Activated B cell treated with CpG ODN at 0.5 μM for 24 hours (primary cell): ENCODE measurements at regions of chr10 and their contacts with region 1.

Region 1: GRCh38 chr10:102641880-102642735 is 2.2 kb upstream of the TRIM8 start:
- DNase-seq: peak; percentile 88
- ATAC-seq: peak; percentile 65
- H3K4me3 Mint-ChIP-seq: peak overlapping the region; percentile 88
- H3K27ac Mint-ChIP-seq: peak overlapping the region; percentile 96
- H3K4me1 Mint-ChIP-seq: peaks cover 27% of the 10 kb centered on the region
- H3K27me3 Mint-ChIP-seq: no peaks in the 10 kb centered on the region
- CTCF ChIP-seq: no peak

Region 2: GRCh38 chr10:100998991-100999741 is 1642.9 kb before region 1 on chr10:
- CTCF ChIA-PET with region 1: no interaction called
- POLR2A ChIA-PET with region 1: no interaction called
- intact Hi-C with region 1: loop called (anchors 5 kb)
- DNase-seq: peak; percentile 85
- ATAC-seq: peak; percentile 63
- H3K4me3 Mint-ChIP-seq: peak overlapping the region; percentile 87
- H3K27ac Mint-ChIP-seq: peak overlapping the region; percentile 88
- H3K4me1 Mint-ChIP-seq: peaks cover 30% of the 10 kb centered on the region
- H3K27me3 Mint-ChIP-seq: no peaks in the 10 kb centered on the region
- CTCF ChIP-seq: peak; percentile 80

Region 3: DNA sequence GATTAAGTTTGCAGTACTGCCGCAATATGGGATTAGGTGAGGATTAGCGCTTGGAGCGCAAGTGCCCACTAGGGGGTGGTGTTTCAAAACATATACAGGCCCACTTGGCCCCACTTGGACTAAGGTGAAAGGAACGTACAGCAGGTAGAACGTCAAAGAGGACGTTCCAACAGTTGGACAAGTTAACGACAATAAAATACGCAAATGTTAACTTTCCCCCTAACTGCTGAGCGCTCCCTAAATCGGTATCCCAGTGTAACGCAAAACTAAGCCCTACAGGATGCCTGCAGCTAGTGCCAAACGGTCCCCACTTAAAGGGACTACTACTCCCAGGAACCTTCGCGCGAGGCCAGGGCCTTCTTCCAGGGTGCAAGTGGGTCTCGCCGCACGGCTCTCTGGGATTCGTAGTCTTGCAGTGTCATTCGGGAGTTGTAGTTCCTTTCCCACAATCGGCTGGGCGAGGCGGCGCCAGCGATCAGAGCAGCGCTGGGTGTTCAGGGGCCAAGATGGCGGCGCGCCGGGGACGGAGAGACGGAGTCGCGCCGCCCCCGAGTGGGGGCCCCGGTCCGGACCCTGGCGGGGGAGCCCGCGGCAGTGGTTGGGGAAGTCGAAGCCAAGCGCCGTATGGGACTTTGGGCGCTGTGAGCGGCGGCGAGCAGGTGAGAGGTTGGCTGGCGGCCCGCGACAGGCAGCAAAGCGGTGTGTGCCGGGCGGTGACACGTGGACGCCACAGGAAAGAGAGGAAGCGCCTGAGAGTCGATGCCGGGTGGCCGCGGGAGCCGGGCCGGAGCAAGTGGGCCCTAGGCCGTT is 509.3 kb before region 1 on chr10 and contains the start of gene PPRC1:
- CTCF ChIA-PET with region 1: no interaction called
- POLR2A ChIA-PET with region 1: no interaction called
- intact Hi-C with region 1: loop called (anchors 2 kb)
- DNase-seq: peak; percentile 89
- ATAC-seq: peak; percentile 93
- H3K4me3 Mint-ChIP-seq: peak within 1 kb of the TSS; percentile 99
- H3K27ac Mint-ChIP-seq: peak within 1 kb of the TSS; percentile 98
- H3K4me1 Mint-ChIP-seq: peaks cover 41% of the 10 kb centered on the region
- H3K27me3 Mint-ChIP-seq: no peaks in the 10 kb centered on the region
- CTCF ChIP-seq: peak; percentile 81
- total RNA-seq, gene PPRC1: 65.1 and 77.2 TPM in 2 replicates

Region 4: DNA sequence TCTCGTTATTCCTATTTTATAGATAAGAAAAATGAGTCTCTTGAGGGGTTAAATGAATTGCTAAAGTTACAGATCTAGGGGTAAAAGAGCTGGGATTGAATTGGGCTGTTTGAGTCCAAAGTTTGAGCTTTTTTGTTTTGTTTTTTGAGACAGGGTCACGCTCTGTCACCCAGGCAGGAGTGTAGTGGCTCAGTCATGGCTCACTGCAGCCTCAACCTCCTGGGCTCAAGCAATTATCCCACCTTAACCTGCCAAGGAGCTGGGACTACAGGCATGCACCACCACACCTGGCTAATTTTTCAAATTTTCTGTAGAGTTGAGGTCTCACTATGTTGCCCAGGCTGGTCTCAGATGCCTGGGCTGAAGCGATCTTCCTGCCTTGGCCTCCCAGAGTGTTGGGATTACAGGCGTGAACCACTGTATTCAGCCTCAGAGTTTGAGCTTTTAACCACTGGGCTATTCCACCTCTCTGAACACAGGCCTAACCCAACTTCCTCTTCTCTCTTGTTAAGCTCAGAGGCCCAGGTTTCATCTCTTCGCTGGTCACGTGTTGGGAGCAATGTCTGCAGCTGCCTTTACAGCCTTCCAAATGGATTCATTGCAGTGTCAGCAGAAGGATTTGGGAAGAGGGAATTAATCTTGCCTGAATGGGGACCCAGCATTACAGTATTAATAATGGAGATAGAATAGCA is 130.4 kb before region 1 on chr10:
- CTCF ChIA-PET with region 1: no interaction called
- POLR2A ChIA-PET with region 1: interaction called, 13 read pairs
- intact Hi-C with region 1: no loop called
- DNase-seq: no peak
- ATAC-seq: peak; percentile 99
- H3K4me3 Mint-ChIP-seq: peak overlapping the region; percentile 42
- H3K27ac Mint-ChIP-seq: peak overlapping the region; percentile 86
- H3K4me1 Mint-ChIP-seq: peaks cover 16% of the 10 kb centered on the region
- H3K27me3 Mint-ChIP-seq: no peaks in the 10 kb centered on the region
- CTCF ChIP-seq: no peak

Region 5: GRCh38 chr10:102652170-102652916 is 10.2 kb after region 1 on chr10:
- CTCF ChIA-PET with region 1: no interaction called
- POLR2A ChIA-PET with region 1: interaction called, 27 read pairs
- intact Hi-C with region 1: loop called (anchors 1 kb)
- DNase-seq: no peak
- ATAC-seq: peak; percentile 57
- H3K4me3 Mint-ChIP-seq: peak overlapping the region; percentile 78
- H3K27ac Mint-ChIP-seq: peak overlapping the region; percentile 98
- H3K4me1 Mint-ChIP-seq: peaks cover 68% of the 10 kb centered on the region
- H3K27me3 Mint-ChIP-seq: no peaks in the 10 kb centered on the region
- CTCF ChIP-seq: no peak

Region 6: DNA sequence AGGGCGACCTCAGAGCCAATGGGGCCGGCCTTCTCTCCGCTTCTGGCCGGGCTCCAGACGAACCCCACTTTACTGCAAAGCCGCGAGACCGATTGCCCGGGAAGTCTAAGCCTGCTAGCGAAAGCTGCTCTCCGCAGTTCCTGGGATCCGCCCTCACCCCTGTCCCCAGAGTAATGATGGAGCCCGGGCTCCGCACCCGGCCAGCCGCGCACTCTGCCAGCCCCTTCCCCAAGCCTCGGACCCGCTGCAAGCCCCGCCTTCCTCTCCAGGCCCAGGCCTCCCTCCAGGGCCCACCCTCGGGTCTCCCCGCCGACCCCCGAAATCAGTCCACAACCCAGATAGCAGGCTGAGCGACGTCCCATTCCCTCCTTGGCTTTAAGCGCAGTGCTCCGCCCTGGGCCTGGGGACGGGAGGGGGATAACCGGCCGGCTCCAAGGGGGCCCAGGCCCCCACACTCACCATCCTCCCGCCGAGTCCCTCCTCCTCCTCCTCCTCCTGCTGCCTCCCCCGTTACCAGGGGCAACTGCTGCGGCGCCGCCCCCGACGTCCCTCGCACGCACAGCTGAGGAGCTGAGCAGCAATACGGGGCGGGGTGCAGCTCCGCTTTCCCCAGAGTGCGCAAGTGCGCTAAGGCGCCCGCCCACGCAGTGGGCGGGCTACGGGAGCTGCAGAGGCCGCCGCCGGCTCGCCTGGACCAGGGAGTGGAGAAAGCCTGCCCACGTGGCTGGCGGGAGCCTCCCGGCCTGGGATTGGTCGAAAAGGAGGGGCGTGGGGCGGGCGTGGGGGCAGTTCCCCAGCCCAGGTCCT is 71.9 kb after region 1 on chr10 and contains the start of gene ARL3:
- CTCF ChIA-PET with region 1: interaction called, 8 read pairs
- POLR2A ChIA-PET with region 1: interaction called, 137 read pairs
- intact Hi-C with region 1: loop called (anchors 1 kb)
- DNase-seq: peak; percentile 89
- ATAC-seq: peak; percentile 85
- H3K4me3 Mint-ChIP-seq: peak within 1 kb of the TSS; percentile 95
- H3K27ac Mint-ChIP-seq: peak within 1 kb of the TSS; percentile 92
- H3K4me1 Mint-ChIP-seq: peaks cover 44% of the 10 kb centered on the region
- H3K27me3 Mint-ChIP-seq: no peaks in the 10 kb centered on the region
- CTCF ChIP-seq: no peak
- total RNA-seq, gene ARL3: 4.1 and 5.1 TPM in 2 replicates

Region 7: GRCh38 chr10:102869258-102870198 is 227.4 kb after region 1 on chr10 and contains the start of gene AS3MT:
- CTCF ChIA-PET with region 1: no interaction called
- POLR2A ChIA-PET with region 1: no interaction called
- intact Hi-C with region 1: no loop called
- DNase-seq: no peak
- ATAC-seq: peak; percentile 66
- H3K4me3 Mint-ChIP-seq: peak within 1 kb of the TSS; percentile 68
- H3K27ac Mint-ChIP-seq: no peak within 1 kb of the TSS
- H3K4me1 Mint-ChIP-seq: peaks cover 16% of the 10 kb centered on the region
- H3K27me3 Mint-ChIP-seq: peaks cover 26% of the 10 kb centered on the region
- CTCF ChIP-seq: no peak
- total RNA-seq, gene AS3MT: 0.31 and 0.46 TPM in 2 replicates

Region 8: GRCh38 chr10:103367782-103368518 is 725.8 kb after region 1 on chr10 and contains the start of gene TAF5:
- CTCF ChIA-PET with region 1: no interaction called
- POLR2A ChIA-PET with region 1: no interaction called
- intact Hi-C with region 1: loop called (anchors 10 kb)
- DNase-seq: peak; percentile 79
- ATAC-seq: peak; percentile 72
- H3K4me3 Mint-ChIP-seq: peak within 1 kb of the TSS; percentile 90
- H3K27ac Mint-ChIP-seq: peak within 1 kb of the TSS; percentile 87
- H3K4me1 Mint-ChIP-seq: peaks cover 12% of the 10 kb centered on the region
- H3K27me3 Mint-ChIP-seq: no peaks in the 10 kb centered on the region
- CTCF ChIP-seq: no peak
- total RNA-seq, gene TAF5: 3.6 and 3.8 TPM in 2 replicates